SK-N-SH (cell line): ENCODE measurements at regions of chr17 and their contacts with region 1.

Region 1: GRCh38 chr17:44775136-44775837 is 16.5 kb downstream of the ADAM11 start:
- DNase-seq: peak; percentile 98
- H3K4me3 ChIP-seq: peak overlapping the region; percentile 64 to 84
- H3K27ac ChIP-seq: no peak overlapping the region
- H3K4me1 ChIP-seq: peaks cover 0 to 31% of the 10 kb centered on the region in 2 experiments; a peak in 1 of 4 replicates
- H3K27me3 ChIP-seq: no peaks in the 10 kb centered on the region
- CTCF ChIP-seq: no peak; the same call in 1 of the 2 replicates
- EP300 ChIP-seq: no peak
- RAD21 ChIP-seq: no peak

Region 2: GRCh38 chr17:44758414-44759085 is 16.7 kb before region 1 on chr17 and contains the start of gene ADAM11:
- CTCF ChIA-PET with region 1: interaction called, 37 read pairs
- POLR2A ChIA-PET with region 1: interaction called, 3 read pairs
- DNase-seq: peak; percentile 91
- H3K4me3 ChIP-seq: peak within 1 kb of the TSS in 1 of 2 experiments; percentile 43; a peak in 3 of 4 replicates
- H3K27ac ChIP-seq: no peak within 1 kb of the TSS
- H3K4me1 ChIP-seq: peaks cover 0 to 12% of the 10 kb centered on the region in 2 experiments; a peak in 1 of 4 replicates
- H3K27me3 ChIP-seq: no peaks in the 10 kb centered on the region
- CTCF ChIP-seq: no peak
- EP300 ChIP-seq: no peak
- RAD21 ChIP-seq: no peak
- polyA plus RNA-seq, gene ADAM11: 1.8 and 2.5 TPM in 2 replicates

Region 3: DNA sequence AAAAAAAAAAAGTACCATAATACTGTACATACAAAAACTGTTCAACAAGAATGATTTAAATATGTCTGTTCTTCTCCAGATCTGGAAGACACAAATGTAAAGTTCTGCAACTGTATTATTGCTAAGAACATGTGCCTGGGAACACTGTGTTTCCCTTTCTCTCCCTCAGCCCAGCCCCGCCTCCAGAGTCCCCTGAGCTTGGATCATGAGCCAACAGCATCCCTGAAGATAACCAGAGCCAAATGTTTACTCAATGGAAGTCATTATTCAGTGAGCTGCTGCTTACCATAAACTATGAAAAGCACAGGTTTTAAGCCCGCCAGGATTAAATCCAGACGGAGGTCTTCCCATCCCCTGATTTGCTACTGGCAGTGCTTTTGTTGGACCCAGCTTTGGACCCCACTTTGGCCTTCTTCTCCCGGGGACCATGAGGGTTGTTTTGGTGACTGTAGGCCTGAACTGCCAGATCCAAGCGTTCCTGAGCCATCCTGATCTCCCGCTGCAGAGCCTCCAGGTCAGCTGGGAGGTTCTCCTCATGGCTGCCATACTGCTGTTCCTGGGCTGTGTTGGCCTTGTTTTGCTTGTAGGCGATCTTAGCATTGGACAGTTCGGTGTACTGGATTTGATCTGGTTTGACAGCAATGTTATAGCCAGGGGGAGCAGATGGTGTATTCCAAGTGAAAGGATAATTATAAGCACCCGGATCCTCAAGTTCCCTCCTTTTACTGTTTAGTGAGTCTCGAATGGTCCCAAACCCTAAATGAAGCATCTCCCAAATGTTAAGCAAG is 29.2 kb after region 1 on chr17:
- CTCF ChIA-PET with region 1: interaction called, 37 read pairs
- POLR2A ChIA-PET with region 1: no interaction called
- DNase-seq: no peak
- H3K4me3 ChIP-seq: no peak overlapping the region
- H3K27ac ChIP-seq: no peak overlapping the region; a peak in 1 of 4 replicates
- H3K4me1 ChIP-seq: peaks cover 6 to 11% of the 10 kb centered on the region in 2 experiments; a peak in 3 of 4 replicates
- H3K27me3 ChIP-seq: no peaks in the 10 kb centered on the region
- CTCF ChIP-seq: no peak
- EP300 ChIP-seq: no peak
- RAD21 ChIP-seq: no peak

Region 4: GRCh38 chr17:44820631-44821212 is 45.4 kb after region 1 on chr17:
- CTCF ChIA-PET with region 1: interaction called, 17 read pairs
- POLR2A ChIA-PET with region 1: no interaction called
- DNase-seq: no peak
- H3K4me3 ChIP-seq: peak overlapping the region; percentile 11 to 35; a peak in 2 of 4 replicates
- H3K27ac ChIP-seq: peak overlapping the region; percentile 56 to 92
- H3K4me1 ChIP-seq: peaks cover 3 to 19% of the 10 kb centered on the region in 2 experiments; a peak in 3 of 4 replicates
- H3K27me3 ChIP-seq: no peaks in the 10 kb centered on the region
- CTCF ChIP-seq: no peak
- EP300 ChIP-seq: peak in 1 of 2 experiments; percentile 80; a peak in 2 of 4 replicates
- RAD21 ChIP-seq: no peak

Region 5: DNA sequence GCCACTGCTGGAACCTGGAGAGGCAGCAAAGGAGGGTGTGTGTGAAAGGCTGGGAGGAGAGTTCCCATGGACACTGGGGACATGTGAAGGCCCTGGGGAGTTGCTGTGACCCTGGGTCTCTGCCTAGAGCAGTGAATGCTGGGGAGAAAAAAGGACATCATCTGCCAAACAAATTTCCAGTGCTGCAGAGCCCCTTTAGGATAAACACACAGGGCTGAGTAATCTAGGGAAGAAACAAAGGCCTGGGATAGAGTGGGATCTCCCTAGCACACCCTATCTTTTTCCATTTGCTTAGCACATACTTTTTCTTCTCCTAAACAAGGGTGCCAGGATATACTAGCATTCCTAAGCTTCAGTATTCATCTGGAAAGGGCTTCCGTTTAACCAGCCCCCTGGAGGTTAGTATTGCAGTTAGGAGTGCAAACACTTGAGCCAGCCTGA is 69.1 kb after region 1 on chr17:
- CTCF ChIA-PET with region 1: interaction called, 202 read pairs
- POLR2A ChIA-PET with region 1: no interaction called
- DNase-seq: no peak
- H3K4me3 ChIP-seq: no peak overlapping the region
- H3K27ac ChIP-seq: no peak overlapping the region
- H3K4me1 ChIP-seq: no peaks in the 10 kb centered on the region; a peak in 1 of 4 replicates
- H3K27me3 ChIP-seq: no peaks in the 10 kb centered on the region
- CTCF ChIP-seq: no peak
- EP300 ChIP-seq: no peak
- RAD21 ChIP-seq: no peak

Region 6: GRCh38 chr17:44878627-44879221 is 103.4 kb after region 1 on chr17:
- CTCF ChIA-PET with region 1: interaction called, 324 read pairs
- POLR2A ChIA-PET with region 1: interaction called, 3 read pairs
- DNase-seq: peak; percentile 47
- H3K4me3 ChIP-seq: no peak overlapping the region; a peak in 1 of 4 replicates
- H3K27ac ChIP-seq: no peak overlapping the region; a peak in 1 of 4 replicates
- H3K4me1 ChIP-seq: no peaks in the 10 kb centered on the region
- H3K27me3 ChIP-seq: no peaks in the 10 kb centered on the region
- CTCF ChIP-seq: peak; percentile 80
- EP300 ChIP-seq: no peak
- RAD21 ChIP-seq: peak; percentile 61

Region 7: DNA sequence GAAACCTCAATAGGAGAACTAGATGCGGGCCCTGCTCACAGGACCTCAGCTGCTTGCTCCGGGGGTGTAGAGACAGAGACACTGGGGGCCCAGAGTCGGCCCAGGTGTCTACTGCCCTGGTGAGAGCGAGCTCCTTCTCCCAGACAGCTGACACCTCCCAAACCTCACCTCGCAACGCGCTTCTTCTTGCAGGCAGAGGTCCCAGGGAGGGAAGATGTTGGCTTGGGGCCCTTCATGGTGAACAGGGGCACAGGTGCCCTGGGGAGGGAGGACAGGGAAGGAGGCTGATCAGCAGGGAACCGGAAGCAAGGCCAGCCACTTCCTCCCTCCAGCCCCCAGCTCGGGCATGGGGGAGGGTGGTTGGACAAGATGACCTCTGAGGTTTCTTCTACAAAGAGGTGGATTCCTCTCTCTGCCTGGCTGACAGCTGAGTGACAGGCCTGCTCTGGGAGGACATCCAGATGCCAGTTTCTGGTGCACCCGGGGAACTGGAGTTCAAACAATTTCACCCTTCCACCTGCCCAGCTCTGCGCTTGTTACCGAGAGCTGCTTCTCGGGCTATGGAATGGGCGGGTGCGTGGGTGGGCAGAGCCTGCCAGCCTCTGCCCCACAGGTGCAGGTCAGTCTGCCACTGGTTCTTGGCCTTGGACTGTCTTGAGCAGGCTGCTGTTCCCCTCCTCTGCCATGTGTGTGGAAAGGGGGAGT is 151.7 kb after region 1 on chr17:
- CTCF ChIA-PET with region 1: no interaction called
- POLR2A ChIA-PET with region 1: no interaction called
- DNase-seq: no peak
- H3K4me3 ChIP-seq: no peak overlapping the region
- H3K27ac ChIP-seq: no peak overlapping the region
- H3K4me1 ChIP-seq: peaks cover 0 to 41% of the 10 kb centered on the region in 2 experiments; a peak in 1 of 4 replicates
- H3K27me3 ChIP-seq: no peaks in the 10 kb centered on the region
- CTCF ChIP-seq: no peak
- EP300 ChIP-seq: no peak
- RAD21 ChIP-seq: no peak

Region 8: DNA sequence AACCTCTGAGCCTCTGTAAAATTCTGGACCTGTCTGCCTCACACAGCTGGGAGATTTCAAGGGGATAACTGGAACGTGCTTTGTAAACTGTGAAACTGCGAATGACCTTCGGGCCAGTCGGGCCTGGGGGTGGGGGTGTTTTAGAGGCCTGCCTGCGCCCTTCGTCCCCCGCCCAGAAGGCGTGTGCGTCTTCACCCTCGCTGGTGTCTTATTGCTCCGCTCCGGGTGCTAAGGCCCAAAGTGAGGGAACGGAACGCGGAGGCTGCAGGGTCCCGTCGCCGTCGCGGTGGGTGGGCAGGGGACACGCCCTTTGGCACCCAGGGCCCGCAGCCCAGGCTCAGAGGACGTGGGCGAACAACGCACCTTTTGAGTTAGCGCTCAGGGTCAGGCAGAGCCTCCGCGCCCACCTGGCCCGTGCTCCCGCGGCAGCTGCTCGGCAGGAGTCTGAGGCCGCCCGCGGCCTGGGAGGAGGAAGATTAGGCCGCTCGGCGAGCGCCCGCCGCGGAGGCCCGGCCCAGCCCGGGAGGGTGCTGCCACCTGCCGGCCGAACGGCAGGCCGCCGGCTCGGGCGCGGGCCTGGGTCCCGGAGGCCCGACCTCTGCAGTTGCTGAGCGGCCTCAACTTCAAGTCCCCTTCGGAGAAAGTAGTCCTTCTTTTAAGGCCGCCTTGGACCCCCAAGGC is 246.5 kb after region 1 on chr17:
- CTCF ChIA-PET with region 1: interaction called, 40 read pairs
- POLR2A ChIA-PET with region 1: no interaction called
- DNase-seq: peak; percentile 96
- H3K4me3 ChIP-seq: peak overlapping the region in 1 of 2 experiments; percentile 19; a peak in 1 of 4 replicates
- H3K27ac ChIP-seq: peak overlapping the region in 1 of 2 experiments; percentile 77; a peak in 2 of 4 replicates
- H3K4me1 ChIP-seq: peaks cover 10 to 34% of the 10 kb centered on the region in 2 experiments; a peak in 1 of 4 replicates
- H3K27me3 ChIP-seq: no peaks in the 10 kb centered on the region
- CTCF ChIP-seq: peak; percentile 88
- EP300 ChIP-seq: no peak
- RAD21 ChIP-seq: peak; percentile 77